GM12878 (cell line): ENCODE measurements at regions of chr5 and their contacts with region 1.

Region 1: DNA sequence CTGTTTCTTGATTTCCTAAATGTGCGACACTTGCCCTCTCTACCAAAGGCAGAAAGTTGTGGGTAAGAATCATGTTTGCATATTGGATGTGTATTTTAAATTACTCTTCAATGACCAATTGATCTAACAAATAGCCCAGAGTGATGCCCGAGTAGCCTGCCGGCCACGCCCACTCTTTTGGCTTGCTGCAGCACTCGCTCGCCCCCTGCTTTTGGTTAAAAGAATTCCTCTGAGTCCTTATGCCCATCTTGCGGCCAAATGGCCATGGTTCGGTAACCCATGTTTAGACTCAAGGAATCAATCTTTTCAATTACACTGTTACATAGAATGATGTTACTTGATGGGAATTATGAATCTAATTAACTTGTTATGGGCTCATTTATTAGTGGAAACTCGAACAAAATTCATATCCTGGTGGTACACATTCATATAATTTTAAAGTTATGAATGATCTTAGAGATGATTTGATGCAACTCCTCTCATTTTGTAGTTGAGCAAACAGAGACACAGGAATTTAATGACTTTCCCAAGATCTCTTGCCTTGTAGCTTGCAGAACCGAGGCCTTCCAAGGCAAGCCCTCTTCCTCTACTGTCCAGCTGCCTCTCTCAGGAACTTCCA is 36.5 kb downstream of the PPIC start:
- DNase-seq: peak; percentile 40
- ATAC-seq: peak; percentile 99
- H3K4me3 ChIP-seq: no peak overlapping the region
- H3K27ac ChIP-seq: no peak overlapping the region
- H3K4me1 ChIP-seq: no peaks in the 10 kb centered on the region
- H3K27me3 ChIP-seq: no peaks in the 10 kb centered on the region
- CTCF ChIP-seq: peak; percentile 79 to 89 (median 82)
- EP300 ChIP-seq: no peak
- POLR2A ChIP-seq: no peak
- RAD21 ChIP-seq: peak; percentile 95

Region 2: DNA sequence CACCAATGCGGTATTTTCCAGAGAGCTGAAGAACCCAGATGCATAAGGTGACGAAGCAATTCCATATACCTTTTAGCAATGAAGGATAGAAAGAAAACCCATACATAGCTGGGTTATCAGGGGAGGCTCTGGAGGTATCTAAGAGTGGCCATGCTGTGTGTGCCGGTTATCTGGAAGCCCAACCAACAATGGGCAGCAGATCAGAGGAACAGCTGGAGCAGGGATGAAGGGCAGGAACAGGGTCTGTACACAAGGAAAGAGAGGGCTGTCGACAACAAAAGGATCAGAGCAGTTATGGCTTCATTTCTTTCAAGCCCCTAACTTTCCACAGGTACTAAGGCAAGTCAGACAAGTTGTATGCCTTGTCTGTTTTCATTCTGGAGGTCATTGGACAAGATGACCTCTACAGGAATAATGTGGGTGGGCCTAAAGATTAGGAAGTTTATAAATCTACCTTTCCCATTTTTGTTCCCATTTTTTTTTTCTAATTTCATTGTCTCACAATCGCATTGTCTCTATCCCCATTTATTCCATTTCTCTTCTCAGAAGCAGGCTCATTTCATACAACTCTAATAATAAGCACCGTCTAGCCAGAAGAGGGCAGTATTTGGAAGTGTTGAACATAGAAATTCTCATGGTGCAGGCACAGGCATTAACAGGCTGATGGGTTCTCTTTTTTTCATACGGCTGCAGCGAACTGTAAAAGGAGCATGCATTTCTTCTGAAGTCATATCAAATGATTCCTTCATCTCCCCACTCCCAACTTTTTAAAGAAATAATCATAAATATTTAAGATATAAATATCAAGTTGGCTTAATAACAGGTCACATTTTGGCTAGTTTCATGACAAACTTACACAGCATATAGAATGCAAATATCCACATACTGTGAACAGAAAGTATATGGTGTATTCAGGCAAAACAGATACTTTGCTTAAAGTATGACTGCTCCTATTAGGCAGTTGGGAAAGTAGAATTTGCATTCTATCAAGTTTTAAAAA is 807.3 kb before region 1 on chr5:
- CTCF ChIA-PET with region 1: interaction called, 4 read pairs
- POLR2A ChIA-PET with region 1: no interaction called
- RAD21 ChIA-PET with region 1: interaction called, 3 read pairs
- SMC1A ChIA-PET with region 1: no interaction called
- in situ Hi-C with region 1: no loop called
- intact Hi-C with region 1: loop called (anchors 5 kb)
- DNase-seq: peak; percentile 11
- ATAC-seq: peak; percentile 95
- H3K4me3 ChIP-seq: no peak overlapping the region
- H3K27ac ChIP-seq: no peak overlapping the region
- H3K4me1 ChIP-seq: no peaks in the 10 kb centered on the region
- H3K27me3 ChIP-seq: no peaks in the 10 kb centered on the region; a peak in 2 of 4 replicates
- CTCF ChIP-seq: peak; percentile 56 to 65 (median 58)
- EP300 ChIP-seq: no peak
- POLR2A ChIP-seq: no peak
- RAD21 ChIP-seq: peak; percentile 89

Region 3: DNA sequence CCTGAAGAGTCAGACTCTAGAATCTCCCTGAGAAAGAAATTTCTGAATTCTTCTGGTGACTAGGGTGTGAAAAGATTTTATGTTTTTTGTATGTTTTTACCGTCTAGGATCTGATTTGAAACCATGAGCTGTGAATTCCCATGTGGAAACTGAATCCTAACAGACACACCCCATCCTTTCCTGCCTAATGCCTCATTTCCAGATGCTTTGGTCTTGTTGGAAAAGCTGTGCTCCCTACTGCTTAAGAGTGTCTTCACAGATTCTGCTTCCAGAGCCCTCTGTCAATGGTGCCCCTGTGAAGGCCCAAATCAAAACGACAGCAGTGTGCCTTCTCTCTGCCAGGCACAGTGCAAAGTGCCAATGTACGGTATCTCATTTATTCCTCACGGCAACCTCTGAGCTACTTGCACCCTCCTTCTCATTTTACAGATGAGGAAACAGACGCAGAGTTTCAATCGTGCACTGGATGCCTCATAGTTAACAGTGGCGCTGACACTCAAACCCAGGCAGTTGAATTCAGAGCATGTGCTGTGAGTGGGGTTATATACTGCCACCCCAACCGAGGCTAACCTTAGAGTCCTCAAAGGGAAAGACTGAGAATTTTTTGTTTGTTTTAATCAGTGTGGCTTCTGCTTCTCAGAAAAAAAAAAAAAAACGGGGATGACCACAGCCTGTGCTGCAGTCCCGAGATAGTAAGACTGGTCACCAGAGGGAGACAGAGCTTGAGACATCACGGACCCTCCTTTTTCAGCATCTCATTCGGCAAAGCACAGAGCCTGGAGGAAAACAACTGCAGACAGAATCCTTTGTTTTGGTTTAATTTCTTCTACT is 499.6 kb before region 1 on chr5:
- CTCF ChIA-PET with region 1: no interaction called
- POLR2A ChIA-PET with region 1: no interaction called
- RAD21 ChIA-PET with region 1: no interaction called
- SMC1A ChIA-PET with region 1: no interaction called
- in situ Hi-C with region 1: no loop called
- intact Hi-C with region 1: loop called (anchors 5 kb)
- DNase-seq: no peak
- ATAC-seq: peak; percentile 79
- H3K4me3 ChIP-seq: no peak overlapping the region
- H3K27ac ChIP-seq: no peak overlapping the region
- H3K4me1 ChIP-seq: no peaks in the 10 kb centered on the region
- H3K27me3 ChIP-seq: peaks cover 0 to 2% of the 10 kb centered on the region in 2 experiments; a peak in 1 of 4 replicates
- CTCF ChIP-seq: peak in 2 of 3 experiments; percentile 33 to 56; a peak in 4 of 6 replicates
- EP300 ChIP-seq: no peak
- POLR2A ChIP-seq: no peak
- RAD21 ChIP-seq: peak; percentile 73

Region 4: DNA sequence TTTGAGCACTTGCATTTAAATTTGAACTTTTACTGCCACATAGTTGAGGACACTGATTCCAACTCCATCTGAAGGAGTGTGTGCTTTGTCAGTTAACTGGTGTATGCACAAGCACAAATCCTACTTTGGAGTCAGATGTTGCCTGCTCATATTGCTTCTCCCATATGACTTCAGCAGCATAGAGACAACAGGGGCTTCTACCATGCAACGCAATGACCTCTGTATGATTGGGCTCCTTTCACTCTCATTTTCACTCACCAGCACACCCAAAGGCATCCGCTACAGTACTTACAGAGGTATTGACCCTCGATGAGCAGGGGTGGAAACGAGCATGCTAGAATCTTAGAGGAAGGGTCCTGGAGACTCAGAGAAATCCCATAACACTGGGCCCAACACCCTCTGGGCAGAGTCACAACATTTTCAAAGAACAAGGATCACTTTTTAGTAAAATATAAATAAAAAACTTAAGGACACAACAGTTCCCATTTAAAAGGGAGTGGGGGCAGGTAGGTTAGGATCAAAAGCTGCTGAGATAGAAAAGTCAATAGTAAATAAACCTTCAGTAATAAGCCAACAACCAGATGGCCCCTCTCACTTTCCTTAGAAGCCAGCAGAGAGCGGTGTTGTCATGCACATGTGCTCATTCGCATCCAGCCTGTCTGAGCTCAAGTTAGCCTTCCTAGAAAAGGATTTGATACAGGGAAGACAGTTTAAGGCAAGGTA is 484.2 kb before region 1 on chr5:
- CTCF ChIA-PET with region 1: interaction called, 11 read pairs
- POLR2A ChIA-PET with region 1: no interaction called
- RAD21 ChIA-PET with region 1: interaction called, 7 read pairs
- SMC1A ChIA-PET with region 1: interaction called, 4 read pairs
- in situ Hi-C with region 1: loop called (anchors 5 kb)
- intact Hi-C with region 1: loop called (anchors 1 kb)
- DNase-seq: no peak
- ATAC-seq: peak; percentile 88
- H3K4me3 ChIP-seq: no peak overlapping the region
- H3K27ac ChIP-seq: no peak overlapping the region
- H3K4me1 ChIP-seq: no peaks in the 10 kb centered on the region
- H3K27me3 ChIP-seq: no peaks in the 10 kb centered on the region
- CTCF ChIP-seq: peak; percentile 67 to 78 (median 74); a peak in 5 of 6 replicates
- EP300 ChIP-seq: no peak
- POLR2A ChIP-seq: no peak
- RAD21 ChIP-seq: peak; percentile 97

Region 5: DNA sequence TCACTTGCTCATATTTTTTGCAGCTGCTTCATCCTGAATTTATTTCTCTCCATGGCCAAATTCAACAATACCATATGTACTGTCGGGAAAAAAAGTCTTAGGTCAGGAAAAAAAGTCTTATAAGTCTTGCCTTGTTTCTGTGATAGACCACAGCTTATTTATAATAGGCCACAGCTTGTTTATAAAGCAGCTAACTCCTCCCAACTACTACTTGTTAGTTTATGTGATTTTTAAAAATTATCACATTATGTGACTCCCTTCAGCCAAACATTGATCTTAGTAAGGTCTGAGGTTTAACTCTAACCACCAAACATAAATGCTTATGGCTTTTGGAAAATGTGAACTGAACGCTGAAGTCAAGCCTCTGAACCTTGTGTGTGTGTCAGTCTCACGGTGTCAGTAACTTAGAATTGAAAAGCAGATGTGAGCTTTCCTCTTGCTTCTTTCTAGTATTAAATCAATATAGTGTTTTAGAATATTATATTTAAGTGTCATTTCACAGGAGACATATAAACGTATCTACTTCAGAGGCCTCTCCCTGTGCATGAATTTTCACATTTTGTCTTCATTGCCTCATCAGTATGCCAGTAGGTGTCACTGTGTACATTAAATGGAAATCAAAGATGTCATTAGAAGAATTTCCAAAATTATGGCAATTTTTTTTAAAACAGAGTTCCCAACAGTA is 103.3 kb before region 1 on chr5:
- CTCF ChIA-PET with region 1: interaction called, 6 read pairs
- POLR2A ChIA-PET with region 1: no interaction called
- RAD21 ChIA-PET with region 1: interaction called, 3 read pairs
- SMC1A ChIA-PET with region 1: no interaction called
- in situ Hi-C with region 1: loop called (anchors 5 kb)
- intact Hi-C with region 1: loop called (anchors 1 kb)
- DNase-seq: no peak
- ATAC-seq: 0 out of 3 replicates have a peak, but pooled peaks have one; percentile 33
- H3K4me3 ChIP-seq: no peak overlapping the region
- H3K27ac ChIP-seq: no peak overlapping the region
- H3K4me1 ChIP-seq: no peaks in the 10 kb centered on the region
- H3K27me3 ChIP-seq: no peaks in the 10 kb centered on the region
- CTCF ChIP-seq: peak; percentile 30 to 49 (median 48); a peak in 5 of 6 replicates
- EP300 ChIP-seq: no peak
- POLR2A ChIP-seq: no peak
- RAD21 ChIP-seq: peak; percentile 70

Region 6: DNA sequence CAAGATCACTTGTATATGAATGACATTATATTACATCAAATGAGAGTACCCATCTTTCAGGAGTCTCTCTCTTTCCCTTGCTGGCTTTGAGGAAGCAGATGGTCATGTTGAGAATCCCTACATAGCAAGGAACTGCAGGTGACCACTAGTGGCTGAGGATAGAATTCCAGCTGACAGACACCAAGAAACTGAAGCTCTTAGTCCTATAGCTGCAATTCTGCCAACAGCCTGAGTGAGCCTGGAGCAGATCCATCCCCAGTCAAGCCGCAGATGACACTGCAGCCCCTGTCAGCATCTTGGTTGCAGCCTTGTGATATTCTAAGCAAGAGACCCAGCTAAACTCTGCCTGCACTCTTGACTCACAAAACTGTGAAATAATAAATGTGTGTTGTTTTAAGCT is 1043.4 kb after region 1 on chr5:
- CTCF ChIA-PET with region 1: no interaction called
- POLR2A ChIA-PET with region 1: no interaction called
- RAD21 ChIA-PET with region 1: no interaction called
- SMC1A ChIA-PET with region 1: no interaction called
- in situ Hi-C with region 1: no loop called
- intact Hi-C with region 1: no loop called
- DNase-seq: no peak
- ATAC-seq: peak; percentile 41; the same call in 1 of the 3 replicates
- H3K4me3 ChIP-seq: no peak overlapping the region
- H3K27ac ChIP-seq: no peak overlapping the region
- H3K4me1 ChIP-seq: no peaks in the 10 kb centered on the region
- H3K27me3 ChIP-seq: no peaks in the 10 kb centered on the region
- CTCF ChIP-seq: no peak
- EP300 ChIP-seq: no peak
- POLR2A ChIP-seq: no peak
- RAD21 ChIP-seq: no peak